ENCODE measurements at regions of chr6 and their contacts with region 1.

Region 1: DNA sequence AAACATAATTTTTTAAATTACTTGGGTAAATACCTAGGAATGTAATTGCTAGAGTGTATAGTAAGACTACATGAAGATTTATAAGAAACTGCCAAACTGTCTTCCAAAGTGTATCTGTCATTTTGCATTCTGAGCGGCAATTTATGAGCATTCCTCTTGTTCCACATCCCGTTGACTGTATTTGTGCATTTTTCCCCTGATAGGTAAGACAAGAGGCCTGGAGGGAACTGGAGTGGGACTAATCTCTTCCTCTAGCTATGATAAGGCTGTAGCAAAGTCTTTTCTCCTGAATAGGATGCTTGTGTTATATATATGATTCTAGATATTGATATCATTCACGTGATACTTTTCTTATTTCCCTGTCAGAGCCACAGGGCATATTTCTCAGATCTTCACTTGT is 1557.5 kb downstream of the GRIK2 start:
- DNase-seq: no peak
- H3K4me3 ChIP-seq: no peak overlapping the region
- H3K27ac ChIP-seq: no peak overlapping the region
- H3K4me1 ChIP-seq: no peaks in the 10 kb centered on the region
- H3K27me3 ChIP-seq: no peaks in the 10 kb centered on the region
- CTCF ChIP-seq: no peak
- POLR2A ChIP-seq: no peak

Region 2: GRCh38 chr6:104597541-104598050 is 1646.6 kb after region 1 on chr6:
- intact Hi-C with region 1: loop called (anchors 5 kb)
- DNase-seq: no peak
- H3K4me3 ChIP-seq: no peak overlapping the region
- H3K27ac ChIP-seq: no peak overlapping the region
- H3K4me1 ChIP-seq: no peaks in the 10 kb centered on the region
- H3K27me3 ChIP-seq: no peaks in the 10 kb centered on the region
- CTCF ChIP-seq: no peak
- POLR2A ChIP-seq: no peak

Measured in breast epithelium (tissue), 4 donors.